HepG2 (cell line): ENCODE measurements at regions of chr16 and their contacts with region 1.

Region 1: GRCh38 chr16:47499700-47500264 is 38.7 kb downstream of the PHKB start:
- DNase-seq: peak; percentile 96
- ATAC-seq: peak; percentile 100
- H3K4me3 ChIP-seq: peak overlapping the region in 1 of 3 experiments; percentile 19; a peak in 1 of 6 replicates
- H3K27ac ChIP-seq: peak overlapping the region; percentile 86
- H3K4me1 ChIP-seq: peaks cover 43% of the 10 kb centered on the region
- H3K27me3 ChIP-seq: no peaks in the 10 kb centered on the region
- CTCF ChIP-seq: no peak
- EP300 ChIP-seq: peak in 1 of 2 experiments; percentile 85; a peak in 2 of 4 replicates
- POLR2A ChIP-seq: peak in 1 of 2 experiments; percentile 49; a peak in 1 of 4 replicates
- RAD21 ChIP-seq: peak; percentile 35; the same call in 1 of the 2 replicates

Region 2: GRCh38 chr16:47523342-47524006 is 23.7 kb after region 1 on chr16:
- CTCF ChIA-PET with region 1: no interaction called
- POLR2A ChIA-PET with region 1: interaction called, 10 read pairs
- in situ Hi-C with region 1: no loop called
- intact Hi-C with region 1: no loop called
- DNase-seq: peak; percentile 91
- ATAC-seq: peak; percentile 100
- H3K4me3 ChIP-seq: no peak overlapping the region; a peak in 1 of 6 replicates
- H3K27ac ChIP-seq: peak overlapping the region; percentile 30
- H3K4me1 ChIP-seq: peaks cover 22% of the 10 kb centered on the region
- H3K27me3 ChIP-seq: no peaks in the 10 kb centered on the region
- CTCF ChIP-seq: no peak
- EP300 ChIP-seq: peak in 1 of 2 experiments; percentile 22; a peak in 1 of 4 replicates
- POLR2A ChIP-seq: no peak
- RAD21 ChIP-seq: no peak